Left ventricle myocardium superior (tissue), 1 donor: ENCODE measurements at regions of chr10 and their contacts with region 1.

Region 1: DNA sequence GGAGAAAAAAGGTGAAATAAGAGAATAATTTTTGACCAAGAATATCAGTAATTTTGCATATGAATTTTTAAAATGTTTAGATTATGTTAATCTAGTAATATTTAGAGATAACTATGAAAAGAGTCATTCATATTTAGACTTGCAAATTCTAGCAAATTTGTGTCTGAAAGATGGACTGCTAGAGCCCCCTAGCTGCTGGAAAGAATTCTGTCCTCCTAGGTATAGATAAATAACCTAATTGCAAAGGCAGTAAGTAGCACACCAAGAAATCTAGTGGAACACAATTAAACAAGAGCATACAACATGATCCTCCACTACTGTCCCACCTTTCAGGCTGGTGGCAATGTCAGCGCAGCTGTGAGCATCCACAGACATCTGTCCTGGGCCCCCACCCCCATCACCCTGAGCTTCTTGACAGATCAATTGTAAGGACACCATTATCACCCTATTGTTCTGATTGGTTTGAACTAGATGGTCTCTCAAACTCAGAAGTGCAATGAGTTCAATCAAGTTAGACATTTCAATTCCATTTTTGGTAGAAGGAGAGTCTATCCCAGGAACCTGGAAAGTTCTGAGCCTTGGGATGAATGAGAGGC is 15.0 kb upstream of the GFRA1 start:
- DNase-seq: no peak
- ATAC-seq: peak; percentile 37

Region 2: DNA sequence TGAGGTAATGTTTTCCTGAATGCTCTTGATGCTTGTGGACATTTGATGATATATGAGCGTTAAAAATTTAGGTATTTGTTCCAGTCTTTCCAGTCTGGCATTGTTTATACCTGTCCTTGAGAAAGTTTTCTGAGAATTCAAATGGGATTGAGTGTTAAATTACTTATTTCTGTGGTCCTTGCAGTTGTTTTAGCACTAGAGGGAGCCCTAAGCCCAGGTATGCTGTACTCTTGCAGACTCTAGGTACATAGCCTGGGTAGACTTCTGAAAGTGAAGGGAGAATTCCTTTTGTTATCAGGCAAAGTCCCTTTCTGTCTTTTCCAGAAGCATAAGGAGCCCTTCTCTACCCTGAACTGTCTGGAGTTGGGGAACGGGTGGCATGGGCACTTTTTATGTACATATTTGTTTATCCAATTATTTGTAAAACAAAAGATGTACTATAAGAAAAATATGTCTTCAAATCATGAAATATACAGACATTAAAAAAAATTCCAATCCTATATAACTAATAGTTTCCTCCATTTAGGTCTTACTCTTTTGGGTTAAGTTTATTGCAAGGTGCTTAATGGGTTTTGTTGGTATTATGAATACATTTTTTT is 932.7 kb before region 1 on chr10:
- intact Hi-C with region 1: loop called (anchors 10 kb)
- DNase-seq: no peak
- ATAC-seq: peak; percentile 35

Region 3: DNA sequence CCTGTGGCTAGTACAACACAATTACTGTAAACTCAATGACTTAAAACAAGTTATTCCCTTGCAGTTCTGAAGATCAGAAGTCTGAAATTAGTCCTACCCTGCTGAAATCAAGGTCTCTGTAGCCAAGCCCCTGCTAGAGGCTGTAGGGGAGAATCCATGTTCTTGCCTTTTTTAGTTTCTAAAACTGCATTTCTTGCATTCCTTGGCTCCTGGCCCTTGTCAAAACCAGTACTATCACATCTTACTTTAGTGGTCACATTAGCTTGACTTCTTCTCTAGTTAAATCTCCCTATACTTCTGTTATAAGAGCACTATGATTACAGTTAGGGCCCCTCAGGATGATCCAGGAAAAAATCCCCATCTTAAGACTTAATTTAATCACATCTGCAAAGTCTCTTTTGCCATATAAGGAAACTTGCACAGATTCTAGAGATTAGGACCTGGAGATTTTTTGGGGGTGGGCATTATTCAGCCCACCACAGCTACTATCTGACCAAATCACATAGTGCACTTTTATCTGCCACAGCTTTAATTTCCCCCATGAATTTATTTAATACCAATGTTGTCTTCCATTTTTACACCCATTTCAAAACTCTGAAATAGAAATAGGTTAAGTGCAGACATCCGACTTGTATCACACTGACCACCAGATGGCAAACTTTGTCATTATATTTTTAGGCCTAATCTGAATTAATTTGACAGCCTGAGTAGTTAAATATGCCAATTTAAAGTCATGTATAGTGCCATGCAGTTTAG is 581.8 kb before region 1 on chr10:
- intact Hi-C with region 1: loop called (anchors 10 kb)
- DNase-seq: no peak
- ATAC-seq: no peak

Region 4: GRCh38 chr10:115801992-115802391 is 486.0 kb before region 1 on chr10:
- intact Hi-C with region 1: loop called (anchors 10 kb)
- DNase-seq: no peak
- ATAC-seq: no peak

Region 5: GRCh38 chr10:115829521-115830205 is 458.3 kb before region 1 on chr10:
- intact Hi-C with region 1: loop called (anchors 10 kb)
- DNase-seq: no peak
- ATAC-seq: peak; percentile 51

Region 6: GRCh38 chr10:115948465-115948864 is 339.5 kb before region 1 on chr10:
- intact Hi-C with region 1: loop called (anchors 5 kb)
- DNase-seq: no peak
- ATAC-seq: peak; percentile 57

Region 7: DNA sequence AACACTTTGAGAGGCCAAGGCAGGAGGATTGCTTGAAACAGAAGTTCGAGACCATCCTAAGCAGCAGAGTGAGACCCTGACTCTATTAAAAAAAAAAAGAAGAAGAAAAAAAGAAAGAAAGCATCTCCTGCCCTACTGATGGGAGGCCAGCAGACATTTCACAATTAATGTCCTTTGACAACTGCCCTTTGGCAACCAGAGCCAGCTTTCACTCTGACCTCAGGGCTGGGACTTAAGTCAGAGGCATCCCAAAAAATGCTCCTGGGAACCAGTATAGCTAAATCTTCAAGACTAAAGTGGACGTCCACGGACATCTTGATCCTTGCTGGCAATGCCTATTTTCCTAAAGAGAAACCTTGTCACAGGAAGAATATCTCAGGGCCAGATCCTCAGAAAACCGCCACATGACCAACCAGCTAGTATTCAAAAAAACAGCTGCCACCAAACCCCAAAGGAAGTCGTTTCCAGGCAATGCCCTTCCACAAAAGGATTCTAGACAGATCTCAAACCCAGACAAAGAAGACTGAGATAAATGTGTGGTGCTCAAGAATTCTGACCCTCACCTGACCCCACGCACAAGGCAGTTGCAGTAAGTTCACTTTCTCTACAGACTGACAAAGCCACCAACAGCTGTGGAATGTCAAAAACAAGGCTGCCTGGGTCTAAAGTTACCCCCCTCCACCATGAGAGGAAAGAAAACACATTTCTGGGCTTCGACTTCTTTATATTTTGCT is 33.4 kb before region 1 on chr10:
- intact Hi-C with region 1: no loop called
- DNase-seq: no peak
- ATAC-seq: peak; percentile 35